Heart left ventricle (tissue), 16 donors: ENCODE measurements at regions of chrX and their contacts with region 1.

Region 1: DNA sequence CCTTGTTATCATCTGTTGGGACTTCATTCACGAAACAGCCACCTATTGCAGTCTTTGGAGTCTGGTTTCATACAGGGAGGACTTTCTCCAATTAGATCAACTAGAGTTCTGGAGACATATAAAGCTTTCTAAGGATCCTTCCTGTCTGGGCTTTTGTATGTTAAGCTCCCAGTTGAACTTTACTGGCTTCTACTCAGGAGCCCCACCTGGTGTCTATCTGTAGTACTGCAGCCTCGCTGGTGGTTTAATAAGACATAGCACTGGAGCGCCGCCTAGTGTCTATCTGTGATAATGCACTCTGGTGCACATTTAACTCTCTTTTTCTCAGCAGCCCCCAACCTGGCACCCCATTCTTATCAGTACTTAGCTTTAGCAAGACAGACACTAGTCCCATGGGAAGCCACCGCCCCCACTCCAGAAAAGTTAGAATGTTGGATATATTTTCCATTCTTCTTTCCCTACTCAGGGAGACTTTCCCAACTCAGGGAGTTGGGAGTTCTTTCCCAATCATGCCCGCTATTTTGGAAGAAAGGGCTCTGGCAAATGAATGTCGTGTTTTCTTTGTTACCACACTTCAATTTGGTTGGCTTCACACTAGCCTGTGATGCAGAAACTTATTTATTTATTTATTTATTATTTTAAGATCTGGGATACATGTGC is 36.9 kb upstream of the SYTL4 start:
- DNase-seq: peak; percentile 52 to 80 (median 66)
- ATAC-seq: peak in 2 of 4 donors; percentile 47 to 70
- H3K4me3 ChIP-seq: no peak overlapping the region
- H3K27ac ChIP-seq: no peak overlapping the region
- H3K4me1 ChIP-seq: no peaks in the 10 kb centered on the region
- H3K27me3 ChIP-seq: peaks cover 0 to 22% (median 0%) of the 10 kb centered on the region in 9 donors
- CTCF ChIP-seq: peak; percentile 80 to 99 (median 91)
- POLR2A ChIP-seq: no peak

Region 2: GRCh38 chrX:100685284-100685996 is 83.4 kb before region 1 on chrX:
- intact Hi-C with region 1: loop called (anchors 1 to 5 kb)
- DNase-seq: peak in 3 of 5 donors; percentile 31 to 48 (median 38)
- ATAC-seq: peak; percentile 55 to 86 (median 72)
- H3K4me3 ChIP-seq: no peak overlapping the region
- H3K27ac ChIP-seq: no peak overlapping the region
- H3K4me1 ChIP-seq: no peaks in the 10 kb centered on the region
- H3K27me3 ChIP-seq: peaks cover 0 to 25% (median 0%) of the 10 kb centered on the region in 9 donors
- CTCF ChIP-seq: peak; percentile 55 to 86 (median 70)
- POLR2A ChIP-seq: no peak

Region 3: DNA sequence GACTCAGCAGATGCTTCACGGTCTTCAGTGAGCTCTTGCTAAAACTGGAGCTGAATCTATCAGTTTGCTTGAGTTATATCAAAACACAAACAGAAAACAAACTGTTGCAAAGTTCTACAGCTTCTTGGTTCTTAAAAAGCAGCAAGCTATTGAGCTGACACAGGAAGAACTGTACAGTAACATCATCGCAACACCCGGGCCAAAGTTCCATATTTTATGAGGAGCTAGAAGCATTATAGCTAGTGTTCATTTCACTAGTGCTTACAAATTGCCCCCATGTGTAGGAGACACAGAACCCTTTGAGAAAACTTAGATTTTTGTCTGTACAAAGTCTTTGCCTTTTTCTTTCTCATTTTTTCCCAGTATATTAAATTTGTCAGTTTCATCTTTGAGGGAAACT is 34.0 kb after region 1 on chrX:
- intact Hi-C with region 1: no loop called
- DNase-seq: no peak
- ATAC-seq: no peak
- H3K4me3 ChIP-seq: no peak overlapping the region
- H3K27ac ChIP-seq: no peak overlapping the region
- H3K4me1 ChIP-seq: no peaks in the 10 kb centered on the region
- H3K27me3 ChIP-seq: no peaks in the 10 kb centered on the region
- CTCF ChIP-seq: no peak
- POLR2A ChIP-seq: no peak

Region 4: DNA sequence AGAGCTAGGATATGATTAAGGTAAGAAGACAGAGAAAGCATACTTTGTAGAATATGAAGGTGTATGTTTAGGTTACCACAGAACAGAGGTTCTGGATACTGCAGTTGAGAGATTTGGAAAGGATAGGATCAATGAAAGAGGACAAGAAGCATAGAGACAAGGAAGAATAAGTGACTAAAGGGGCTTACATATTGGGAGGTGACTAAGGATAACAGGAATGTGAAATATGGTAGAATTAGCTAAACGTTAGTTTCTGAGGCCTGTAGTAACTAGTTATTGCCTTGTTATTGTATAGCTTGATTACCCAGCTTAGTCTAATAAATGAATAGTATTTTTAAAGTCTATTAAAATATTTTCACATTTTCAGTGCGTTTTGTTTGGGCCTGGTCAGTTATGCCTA is 367.4 kb after region 1 on chrX:
- intact Hi-C with region 1: no loop called
- DNase-seq: no peak
- ATAC-seq: no peak
- H3K4me3 ChIP-seq: no peak overlapping the region
- H3K27ac ChIP-seq: no peak overlapping the region
- H3K4me1 ChIP-seq: no peaks in the 10 kb centered on the region
- H3K27me3 ChIP-seq: peaks cover 0 to 6% (median 0%) of the 10 kb centered on the region in 9 donors
- CTCF ChIP-seq: no peak
- POLR2A ChIP-seq: no peak